K562 (cell line): ENCODE measurements at regions of chr22 and their contacts with region 1.

Region 1: GRCh38 chr22:21567456-21568346 is at the start of gene UBE2L3:
- DNase-seq: peak; percentile 100
- ATAC-seq: peak; percentile 82
- H3K4me3 ChIP-seq: peak within 1 kb of the TSS; percentile 72
- H3K27ac ChIP-seq: peak within 1 kb of the TSS; percentile 93
- H3K4me1 ChIP-seq: peaks cover 35 to 39% of the 10 kb centered on the region in 2 experiments
- H3K27me3 ChIP-seq: no peaks in the 10 kb centered on the region
- CTCF ChIP-seq: peak in 1 of 3 experiments; percentile 25; a peak in 2 of 6 replicates
- EP300 ChIP-seq: peak; percentile 81
- POLR2A ChIP-seq: no peak
- RAD21 ChIP-seq: peak in 1 of 2 experiments; percentile 27; a peak in 1 of 4 replicates
- polyA plus RNA-seq, gene UBE2L3: 575 to 625 TPM

Region 2: GRCh38 chr22:21587803-21588611 is 20.3 kb after region 1 on chr22:
- CTCF ChIA-PET with region 1: no interaction called
- POLR2A ChIA-PET with region 1: interaction called, 4,622 read pairs
- in situ Hi-C with region 1: no loop called
- intact Hi-C with region 1: loop called (anchors 2 kb)
- DNase-seq: peak in 3 of 4 experiments; percentile 74 to 96 (median 93)
- ATAC-seq: peak; percentile 71
- H3K4me3 ChIP-seq: no peak overlapping the region
- H3K27ac ChIP-seq: peak overlapping the region; percentile 7
- H3K4me1 ChIP-seq: peaks cover 34 to 38% of the 10 kb centered on the region in 2 experiments
- H3K27me3 ChIP-seq: no peaks in the 10 kb centered on the region; a peak in 1 of 5 replicates
- CTCF ChIP-seq: no peak
- EP300 ChIP-seq: peak; percentile 88
- POLR2A ChIP-seq: no peak
- RAD21 ChIP-seq: peak; percentile 34 to 46

Region 3: DNA sequence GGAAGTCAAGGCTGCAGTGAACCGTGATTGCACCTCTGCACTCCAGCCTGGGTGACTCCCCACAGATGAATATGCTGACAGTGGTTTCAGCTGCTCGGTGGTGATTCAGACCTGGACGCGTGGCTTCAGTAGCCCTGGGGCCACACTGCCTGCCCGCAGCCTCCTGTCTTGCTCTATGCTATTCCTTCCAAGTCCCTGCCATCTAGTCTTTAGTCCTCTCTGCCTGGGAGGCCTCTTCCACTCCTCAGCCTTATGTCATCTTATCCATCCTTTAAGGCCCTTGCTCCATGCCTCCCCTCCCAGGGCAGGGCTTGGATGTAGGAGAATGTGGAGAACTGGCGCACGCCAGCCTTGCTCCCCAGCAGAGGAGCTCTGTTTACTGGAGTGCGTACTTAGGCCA is 39.1 kb after region 1 on chr22:
- CTCF ChIA-PET with region 1: no interaction called
- POLR2A ChIA-PET with region 1: interaction called, 4,622 read pairs
- in situ Hi-C with region 1: no loop called
- intact Hi-C with region 1: no loop called
- DNase-seq: peak in 3 of 4 experiments; percentile 59 to 73 (median 66)
- ATAC-seq: peak; percentile 18
- H3K4me3 ChIP-seq: no peak overlapping the region
- H3K27ac ChIP-seq: peak overlapping the region; percentile 9; the same call in 2 of the 3 replicates
- H3K4me1 ChIP-seq: peaks cover 26% of the 10 kb centered on the region in 2 experiments
- H3K27me3 ChIP-seq: peaks cover 0 to 2% of the 10 kb centered on the region in 2 experiments; a peak in 1 of 5 replicates
- CTCF ChIP-seq: 0 out of 6 replicates have a peak, but pooled peaks of 1 of the 3 experiments have one; percentile 8
- EP300 ChIP-seq: no peak
- POLR2A ChIP-seq: no peak
- RAD21 ChIP-seq: no peak

Region 4: DNA sequence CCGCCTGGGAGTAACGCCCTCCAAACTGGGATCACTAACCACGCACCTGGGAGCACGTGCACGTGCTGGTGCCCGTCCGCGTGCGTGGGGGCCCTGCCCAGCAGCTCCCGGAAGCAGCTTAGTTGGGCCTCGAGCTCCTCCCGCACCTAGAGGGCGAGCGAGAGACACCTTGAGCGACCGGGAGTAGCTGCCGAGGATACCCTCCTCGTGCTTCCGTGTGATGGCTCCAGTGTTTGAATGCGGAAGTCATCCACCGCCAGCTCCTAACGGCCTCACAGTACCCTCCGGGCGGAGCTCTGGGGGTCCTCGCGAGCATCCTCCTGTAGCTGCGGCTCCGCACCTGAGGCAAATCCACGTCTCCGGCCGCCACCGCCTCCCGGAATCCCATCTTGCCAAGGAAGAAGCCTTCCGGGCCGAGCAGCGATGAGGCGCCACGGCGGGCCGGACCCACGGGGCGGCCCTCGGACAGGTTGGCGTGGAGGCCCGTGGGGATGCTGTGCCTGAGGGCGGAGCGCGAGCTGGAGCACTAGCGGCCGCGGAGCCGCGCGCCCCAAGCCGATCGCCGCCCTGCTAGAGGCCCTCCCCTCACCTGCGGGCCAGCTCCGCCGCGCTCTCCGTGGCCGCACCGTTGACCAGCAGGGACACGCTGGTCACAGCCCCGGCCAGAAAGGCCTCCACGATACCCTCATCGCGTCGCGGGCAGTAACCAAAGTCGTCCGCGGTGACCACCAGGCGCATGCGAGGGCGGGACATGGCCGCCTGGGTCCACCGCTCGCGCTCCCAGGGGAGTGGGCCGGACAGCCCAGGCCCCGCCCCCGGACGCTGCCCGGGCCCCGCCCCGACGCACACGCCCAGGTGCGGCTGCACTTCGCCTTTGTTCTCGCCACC is 61.8 kb after region 1 on chr22 and contains the start of gene YDJC:
- CTCF ChIA-PET with region 1: no interaction called
- POLR2A ChIA-PET with region 1: interaction called, 4,622 read pairs
- in situ Hi-C with region 1: no loop called
- intact Hi-C with region 1: loop called (anchors 2 kb)
- DNase-seq: peak; percentile 100
- ATAC-seq: peak; percentile 83
- H3K4me3 ChIP-seq: peak within 1 kb of the TSS; percentile 59
- H3K27ac ChIP-seq: peak within 1 kb of the TSS; percentile 89
- H3K4me1 ChIP-seq: peaks cover 57 to 85% of the 10 kb centered on the region in 2 experiments
- H3K27me3 ChIP-seq: no peaks in the 10 kb centered on the region
- CTCF ChIP-seq: peak in 1 of 3 experiments; percentile 99; a peak in 2 of 6 replicates
- EP300 ChIP-seq: peak; percentile 90
- POLR2A ChIP-seq: no peak
- RAD21 ChIP-seq: no peak
- polyA plus RNA-seq, gene YDJC: 13.5 to 23.5 TPM

Region 5: DNA sequence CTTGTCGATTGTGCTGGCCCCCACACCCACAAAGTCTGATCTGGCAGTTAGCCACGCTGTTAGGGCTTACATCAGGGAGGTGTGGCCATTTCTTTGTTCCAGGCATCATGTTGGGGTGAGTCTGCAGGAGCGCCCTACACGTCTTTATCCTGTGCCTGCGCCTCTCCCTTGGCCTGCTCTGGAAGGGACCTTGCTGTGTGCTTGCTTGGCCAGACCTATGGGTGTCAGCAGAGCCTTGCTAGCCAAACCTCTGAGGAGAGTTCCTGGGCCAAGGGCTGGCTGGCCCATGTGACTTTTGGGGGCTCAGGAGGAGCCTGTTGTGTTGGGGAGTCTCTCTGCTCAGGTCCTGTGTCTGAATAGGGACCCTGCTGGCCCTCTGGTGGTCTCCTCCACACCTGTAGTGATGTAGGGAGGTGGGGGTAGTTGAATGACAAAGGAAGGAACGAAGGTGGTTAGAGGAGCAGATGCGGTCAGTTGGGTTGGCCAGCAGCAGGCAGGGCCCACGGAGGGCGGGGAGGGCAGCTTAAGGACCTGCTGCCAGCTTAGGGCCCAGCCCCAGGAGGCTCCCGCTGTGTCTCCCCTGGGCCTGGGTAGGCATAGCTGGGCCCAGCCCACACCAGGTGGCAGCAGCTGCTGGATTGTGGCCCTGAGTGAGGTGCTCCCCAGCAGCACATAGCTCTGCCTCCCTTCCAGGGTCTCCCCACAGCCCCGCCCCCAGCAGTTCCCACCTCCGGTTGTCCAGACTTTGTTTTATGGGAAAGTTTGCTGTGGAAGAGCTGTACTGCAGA is 106.0 kb after region 1 on chr22:
- CTCF ChIA-PET with region 1: no interaction called
- POLR2A ChIA-PET with region 1: no interaction called
- in situ Hi-C with region 1: no loop called
- intact Hi-C with region 1: no loop called
- DNase-seq: peak in 1 of 4 experiments; percentile 66
- ATAC-seq: peak; percentile 44
- H3K4me3 ChIP-seq: no peak overlapping the region
- H3K27ac ChIP-seq: no peak overlapping the region
- H3K4me1 ChIP-seq: peaks cover 0 to 16% of the 10 kb centered on the region in 2 experiments; a peak in 2 of 5 replicates
- H3K27me3 ChIP-seq: no peaks in the 10 kb centered on the region
- CTCF ChIP-seq: peak; percentile 20 to 42 (median 31); a peak in 5 of 6 replicates
- EP300 ChIP-seq: no peak
- POLR2A ChIP-seq: no peak
- RAD21 ChIP-seq: no peak